Thyroid gland (tissue), 4 donors: ENCODE measurements at regions of chr2 and their contacts with region 1.

Region 1: GRCh38 chr2:56183643-56184499 is at the start of gene CCDC85A:
- DNase-seq: peak; percentile 92 to 96
- H3K4me3 ChIP-seq: peak within 1 kb of the TSS; percentile 64 to 85 (median 79)
- H3K27ac ChIP-seq: peak within 1 kb of the TSS; percentile 85 to 92 (median 89)
- H3K4me1 ChIP-seq: peaks cover 26 to 34% of the 10 kb centered on the region in 2 donors
- H3K27me3 ChIP-seq: no peaks in the 10 kb centered on the region
- CTCF ChIP-seq: peak; percentile 84 to 96 (median 93)
- POLR2A ChIP-seq: peak in 1 of 2 donors; percentile 83
- total RNA-seq, gene CCDC85A: 24.5 to 36.4 (median 27.6) TPM

Region 2: DNA sequence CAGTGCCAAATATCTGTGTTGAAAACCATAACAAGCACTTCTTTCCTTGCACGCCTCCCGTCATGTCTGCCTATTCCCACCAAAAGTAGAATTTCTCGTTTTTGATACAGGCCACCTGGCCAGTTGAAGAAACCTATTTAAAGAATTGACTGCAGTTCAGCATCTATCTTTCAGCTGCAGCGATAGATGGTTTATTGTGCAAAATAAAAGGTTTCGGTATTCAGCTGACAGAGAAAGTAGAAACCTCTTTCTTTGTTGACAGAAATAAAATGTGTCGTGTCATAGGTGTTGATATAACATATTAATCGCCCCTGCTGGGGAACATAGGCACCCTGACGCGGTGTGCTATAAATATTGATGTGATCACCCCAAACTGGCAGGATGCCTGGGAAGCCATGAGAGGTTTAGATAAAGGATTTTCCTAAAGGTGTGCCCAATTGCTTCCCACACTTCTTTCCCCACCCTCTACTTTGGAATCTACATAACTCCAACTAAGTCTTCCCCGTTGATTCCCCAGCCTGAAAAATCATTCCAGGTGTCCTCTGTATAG is 570.3 kb after region 1 on chr2:
- intact Hi-C with region 1: loop called (anchors 5 kb)
- DNase-seq: no peak
- H3K4me3 ChIP-seq: no peak overlapping the region
- H3K27ac ChIP-seq: no peak overlapping the region
- H3K4me1 ChIP-seq: no peaks in the 10 kb centered on the region
- H3K27me3 ChIP-seq: no peaks in the 10 kb centered on the region
- CTCF ChIP-seq: no peak
- POLR2A ChIP-seq: no peak